MCF 10A (cell line): ENCODE measurements at regions of chr5 and their contacts with region 1.

Region 1: GRCh38 chr5:55994574-55995333 is at the start of gene IL6ST:
- DNase-seq: peak; percentile 98
- H3K4me3 Mint-ChIP-seq: peak within 1 kb of the TSS; percentile 89
- H3K27ac Mint-ChIP-seq: peak within 1 kb of the TSS; percentile 96
- H3K4me1 Mint-ChIP-seq: peaks cover 34% of the 10 kb centered on the region
- H3K27me3 Mint-ChIP-seq: no peaks in the 10 kb centered on the region
- CTCF ChIP-seq: no peak
- total RNA-seq, gene IL6ST: 108 and 115 TPM in 2 replicates

Region 2: DNA sequence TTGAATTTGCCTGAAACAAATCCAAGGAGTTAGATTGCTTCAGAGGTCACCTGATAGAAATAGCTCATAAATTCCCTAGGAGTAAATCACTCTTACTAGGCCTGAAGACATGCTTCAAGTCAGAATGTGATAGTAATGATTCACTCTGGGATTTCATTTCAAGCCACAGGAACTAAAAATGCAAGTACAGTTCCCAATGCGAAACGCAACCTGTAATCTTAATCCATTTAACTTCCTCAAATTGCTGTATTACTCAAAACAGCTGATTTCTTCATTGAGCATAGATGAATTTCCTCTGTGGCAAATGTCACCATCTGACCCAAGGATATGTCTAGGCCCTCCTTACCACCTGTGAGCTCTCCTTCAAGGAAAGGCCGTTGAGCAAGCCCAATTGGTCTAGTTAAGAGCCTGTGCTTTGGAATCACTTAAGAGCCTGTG is 32.1 kb after region 1 on chr5:
- CTCF ChIA-PET with region 1: no interaction called
- POLR2A ChIA-PET with region 1: interaction called, 10 read pairs
- intact Hi-C with region 1: no loop called
- DNase-seq: peak; percentile 61
- H3K4me3 Mint-ChIP-seq: no peak overlapping the region
- H3K27ac Mint-ChIP-seq: peak overlapping the region; percentile 25
- H3K4me1 Mint-ChIP-seq: peaks cover 6% of the 10 kb centered on the region
- H3K27me3 Mint-ChIP-seq: no peaks in the 10 kb centered on the region
- CTCF ChIP-seq: no peak

Region 3: GRCh38 chr5:56060271-56061110 is 65.7 kb after region 1 on chr5:
- CTCF ChIA-PET with region 1: interaction called, 3 read pairs
- POLR2A ChIA-PET with region 1: interaction called, 22 read pairs
- intact Hi-C with region 1: loop called (anchors 10 kb)
- DNase-seq: no peak
- H3K4me3 Mint-ChIP-seq: no peak overlapping the region
- H3K27ac Mint-ChIP-seq: no peak overlapping the region
- H3K4me1 Mint-ChIP-seq: peaks cover 11% of the 10 kb centered on the region
- H3K27me3 Mint-ChIP-seq: peaks cover 39% of the 10 kb centered on the region
- CTCF ChIP-seq: no peak

Region 4: DNA sequence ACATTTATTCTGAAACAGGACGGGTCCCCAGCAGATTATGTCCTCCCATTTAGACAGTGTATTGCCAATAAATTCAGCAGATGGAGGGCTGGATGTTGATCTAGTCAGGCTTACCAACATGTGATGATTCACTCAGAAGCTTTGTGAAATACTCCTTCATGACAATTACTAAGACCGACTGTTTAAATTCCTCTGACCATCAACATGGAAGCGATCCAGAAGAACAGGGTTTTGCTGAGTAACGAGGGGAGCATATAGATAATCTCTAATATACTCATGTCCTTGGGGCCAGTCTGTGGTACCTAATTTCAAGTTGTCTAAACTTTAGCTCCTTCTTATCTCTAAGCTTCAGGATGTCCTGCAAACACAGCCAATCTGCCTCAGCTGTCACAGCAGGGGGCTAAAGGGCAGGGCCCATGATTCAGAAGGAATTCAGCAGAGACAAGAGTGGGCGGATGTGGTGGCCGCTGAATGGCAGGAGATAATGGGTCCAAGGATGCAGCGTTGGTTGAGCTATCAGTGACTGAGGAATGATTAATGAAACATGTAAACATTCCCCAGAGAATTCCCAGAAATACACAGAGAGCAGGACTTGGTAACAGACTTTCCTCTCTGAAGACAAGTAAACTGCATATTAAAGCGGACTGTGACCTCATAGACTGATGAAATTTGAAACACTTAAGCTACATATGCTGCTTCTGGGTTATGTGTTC is 128.9 kb after region 1 on chr5:
- CTCF ChIA-PET with region 1: no interaction called
- POLR2A ChIA-PET with region 1: interaction called, 11 read pairs
- intact Hi-C with region 1: no loop called
- DNase-seq: peak; percentile 89
- H3K4me3 Mint-ChIP-seq: no peak overlapping the region
- H3K27ac Mint-ChIP-seq: peak overlapping the region; percentile 78
- H3K4me1 Mint-ChIP-seq: peaks cover 13% of the 10 kb centered on the region
- H3K27me3 Mint-ChIP-seq: no peaks in the 10 kb centered on the region
- CTCF ChIP-seq: no peak